CD4-positive, alpha-beta T cell (primary cell): ENCODE measurements at regions of chr6 and their contacts with region 1.

Region 1: DNA sequence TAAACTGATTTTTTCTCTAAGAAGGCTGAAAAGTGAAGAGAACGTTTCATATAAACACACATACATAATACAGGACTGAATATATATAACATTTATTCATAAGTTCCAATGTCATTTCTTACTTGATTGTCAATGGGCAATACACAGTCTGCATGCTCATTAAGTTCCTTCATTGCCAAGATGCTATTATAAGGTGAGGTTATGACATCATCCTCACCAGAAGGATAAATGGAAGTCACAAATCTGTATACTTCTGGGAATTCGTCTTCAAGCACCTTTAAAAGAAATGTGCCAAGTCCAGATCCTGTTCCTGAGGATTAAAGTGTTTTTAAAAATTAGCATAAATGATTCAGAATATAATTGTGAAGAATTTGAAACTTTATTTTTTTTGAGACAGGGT is 11.1 kb downstream of the TUBE1 start:
- DNase-seq: no peak
- ATAC-seq: no peak
- H3K4me3 ChIP-seq: no peak overlapping the region
- H3K4me3 Mint-ChIP-seq: no peak overlapping the region
- H3K27ac ChIP-seq: no peak overlapping the region
- H3K27ac Mint-ChIP-seq: no peak overlapping the region
- H3K4me1 ChIP-seq: no peaks in the 10 kb centered on the region
- H3K4me1 Mint-ChIP-seq: no peaks in the 10 kb centered on the region
- H3K27me3 ChIP-seq: no peaks in the 10 kb centered on the region
- H3K27me3 Mint-ChIP-seq: no peaks in the 10 kb centered on the region
- CTCF ChIP-seq: no peak

Region 2: GRCh38 chr6:112087136-112087911 is 11.1 kb after region 1 on chr6 and contains the starts of genes FAM229B and TUBE1:
- CTCF ChIA-PET with region 1: interaction called, 4 read pairs
- POLR2A ChIA-PET with region 1: interaction called, 10 read pairs
- intact Hi-C with region 1: no loop called
- DNase-seq: peak; percentile 81 to 98 (median 84)
- ATAC-seq: peak; percentile 97
- H3K4me3 ChIP-seq: peak within 1 kb of the TSS; percentile 88
- H3K4me3 Mint-ChIP-seq: no peak within 1 kb of the TSS
- H3K27ac ChIP-seq: peak within 1 kb of the TSS; percentile 60 to 84
- H3K27ac Mint-ChIP-seq: no peak within 1 kb of the TSS
- H3K4me1 ChIP-seq: peaks cover 3% of the 10 kb centered on the region
- H3K4me1 Mint-ChIP-seq: peaks cover 11% of the 10 kb centered on the region
- H3K27me3 ChIP-seq: peaks cover 0 to 6% of the 10 kb centered on the region in 2 experiments
- H3K27me3 Mint-ChIP-seq: peaks cover 28% of the 10 kb centered on the region
- CTCF ChIP-seq: no peak
- total RNA-seq, gene FAM229B: 3.6 to 4.4 TPM
- total RNA-seq, gene TUBE1: 28.2 to 30.8 TPM